ENCODE measurements at regions of chr2 and their contacts with region 1.

Region 1: DNA sequence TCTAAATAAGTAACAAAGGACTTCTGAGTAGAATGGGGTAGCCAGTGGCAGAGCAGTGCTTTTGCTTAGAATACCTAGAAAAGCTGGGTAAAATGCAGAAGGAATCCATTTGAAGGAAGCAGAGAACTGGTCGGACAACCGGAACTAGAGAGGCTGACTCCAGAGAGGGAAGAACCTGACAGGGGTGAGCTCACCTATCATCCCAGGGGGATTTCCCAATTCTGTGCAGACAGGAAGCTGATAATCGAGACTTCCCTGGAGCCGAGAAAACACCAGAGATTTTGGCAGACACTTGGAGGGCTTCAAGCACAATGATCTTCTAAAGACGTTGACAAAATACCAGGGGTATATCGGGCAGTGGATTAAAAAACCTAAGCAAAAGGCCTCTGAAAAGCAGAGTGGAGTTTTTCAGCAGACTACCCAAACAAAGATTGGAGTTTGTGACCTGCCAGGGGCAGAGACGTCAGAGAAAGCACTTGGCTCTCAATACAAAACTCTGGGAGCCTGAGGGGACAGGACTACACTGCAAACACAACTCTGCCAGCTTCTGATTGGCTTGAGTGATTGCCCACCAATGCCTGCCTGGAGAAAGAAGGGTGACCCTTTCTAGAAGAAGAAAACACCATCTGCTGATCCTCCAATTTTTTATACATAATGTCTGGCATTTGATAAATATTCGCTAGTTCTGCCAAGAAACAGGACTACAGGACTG is 67.5 kb upstream of the TTN start:
- DNase-seq: no peak
- H3K4me3 Mint-ChIP-seq: no peak overlapping the region
- H3K27ac Mint-ChIP-seq: peak overlapping the region; percentile 74
- H3K4me1 Mint-ChIP-seq: peaks cover 24% of the 10 kb centered on the region
- H3K27me3 Mint-ChIP-seq: no peaks in the 10 kb centered on the region
- CTCF ChIP-seq: no peak

Region 2: DNA sequence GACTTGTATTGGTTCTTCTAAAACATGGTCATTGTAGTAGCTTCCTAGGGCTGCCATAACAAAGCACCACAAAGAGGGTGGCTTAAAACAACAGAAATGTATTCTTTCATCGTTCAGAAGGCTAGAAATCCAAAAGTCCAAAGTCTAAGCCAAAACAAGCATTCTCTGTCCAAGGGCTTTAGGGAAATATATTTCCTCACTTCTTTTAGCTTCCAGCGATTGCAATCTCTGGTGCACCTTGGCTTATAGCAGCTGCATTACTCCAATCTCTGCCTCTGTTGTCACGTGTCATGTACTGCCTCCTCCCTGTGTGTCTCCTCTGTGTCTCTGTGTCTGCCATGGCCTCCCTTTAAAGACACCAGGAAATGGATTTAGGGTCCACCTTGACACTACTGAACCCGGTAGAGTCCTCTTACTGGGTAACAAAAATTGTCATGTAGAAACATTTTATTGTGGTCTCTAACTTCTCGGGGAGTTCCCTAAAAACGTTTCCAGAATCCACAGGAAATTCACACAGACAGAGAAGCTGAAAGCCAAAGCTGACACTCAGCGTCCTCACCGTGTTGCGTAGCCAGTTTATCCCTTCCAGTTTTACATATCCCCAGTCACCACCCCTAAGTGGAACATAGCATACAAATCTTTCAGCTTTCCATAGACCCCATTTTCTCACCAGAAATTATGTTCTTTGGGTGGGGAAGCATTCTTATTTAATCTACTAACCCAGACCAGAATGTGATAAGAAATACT is 46.8 kb before region 1 on chr2:
- CTCF ChIA-PET with region 1: interaction called, 3 read pairs
- intact Hi-C with region 1: loop called (anchors 2 kb)
- DNase-seq: no peak
- H3K4me3 Mint-ChIP-seq: no peak overlapping the region
- H3K27ac Mint-ChIP-seq: no peak overlapping the region
- H3K4me1 Mint-ChIP-seq: peaks cover 24% of the 10 kb centered on the region
- H3K27me3 Mint-ChIP-seq: no peaks in the 10 kb centered on the region
- CTCF ChIP-seq: no peak

Measured in Calu3 (cell line).